WTC11 (cell line): ENCODE measurements at regions of chr19 and their contacts with region 1.

Region 1: GRCh38 chr19:42343344-42344110 is 18.1 kb downstream of the MEGF8 start:
- DNase-seq: peak; percentile 76
- ATAC-seq: peak; percentile 80
- H3K4me3 Mint-ChIP-seq: no peak overlapping the region
- H3K27ac Mint-ChIP-seq: no peak overlapping the region
- H3K4me1 Mint-ChIP-seq: no peaks in the 10 kb centered on the region
- H3K27me3 Mint-ChIP-seq: no peaks in the 10 kb centered on the region
- CTCF ChIP-seq: peak; percentile 63

Region 2: GRCh38 chr19:42229855-42230351 is 113.6 kb before region 1 on chr19:
- CTCF ChIA-PET with region 1: no interaction called
- POLR2A ChIA-PET with region 1: no interaction called
- DNase-seq: no peak
- ATAC-seq: no peak
- H3K4me3 Mint-ChIP-seq: no peak overlapping the region
- H3K27ac Mint-ChIP-seq: peak overlapping the region; percentile 41; the same call in 1 of the 2 replicates
- H3K4me1 Mint-ChIP-seq: 0 out of 2 replicates have a peak, but pooled peaks cover 4% of the 10 kb centered on the region
- H3K27me3 Mint-ChIP-seq: no peaks in the 10 kb centered on the region
- CTCF ChIP-seq: no peak

Region 3: DNA sequence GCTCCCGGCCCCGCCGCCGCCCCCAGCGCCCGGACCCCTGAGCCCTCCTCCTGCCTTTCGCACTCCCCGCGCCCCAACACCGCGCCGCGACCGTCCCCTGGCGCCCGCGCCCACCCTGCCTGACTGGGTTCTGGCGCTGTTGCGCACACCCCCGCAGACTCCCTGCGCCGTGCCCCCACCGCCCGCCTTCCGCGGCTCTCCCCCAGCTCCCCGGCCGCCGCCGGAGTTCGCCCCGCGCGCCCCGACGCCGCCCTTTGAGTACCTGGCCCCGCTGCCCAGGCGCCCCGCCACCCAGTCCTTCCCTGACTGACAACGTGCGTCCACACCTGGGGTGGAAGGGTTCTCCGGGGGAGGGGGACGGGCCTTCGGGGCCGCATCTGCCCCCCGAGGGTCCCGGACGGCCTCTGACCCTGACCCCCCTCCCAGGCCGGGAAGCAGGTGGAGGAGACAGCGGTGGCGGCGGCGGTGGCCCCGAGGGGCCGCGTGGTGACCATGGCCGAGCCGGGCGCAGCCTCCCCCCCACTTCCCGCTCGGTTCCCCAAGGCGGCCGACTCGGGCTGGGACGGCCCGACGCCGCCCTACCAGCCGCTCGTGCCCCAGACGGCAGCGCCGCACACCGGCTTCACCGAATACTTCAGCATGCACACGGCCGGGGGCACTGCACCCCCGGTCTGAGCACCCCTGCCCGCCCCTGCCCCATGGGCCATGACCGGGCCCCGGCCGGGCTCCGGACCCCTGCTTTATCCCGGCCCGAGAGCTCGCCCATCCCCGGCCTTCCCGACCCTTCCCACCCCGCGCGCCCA is 19.5 kb before region 1 on chr19:
- CTCF ChIA-PET with region 1: interaction called, 30 read pairs
- POLR2A ChIA-PET with region 1: no interaction called
- DNase-seq: peak; percentile 55
- ATAC-seq: no peak
- H3K4me3 Mint-ChIP-seq: peak overlapping the region; percentile 95
- H3K27ac Mint-ChIP-seq: no peak overlapping the region
- H3K4me1 Mint-ChIP-seq: peaks cover 14% of the 10 kb centered on the region
- H3K27me3 Mint-ChIP-seq: peaks cover 44% of the 10 kb centered on the region
- CTCF ChIP-seq: no peak

Region 4: DNA sequence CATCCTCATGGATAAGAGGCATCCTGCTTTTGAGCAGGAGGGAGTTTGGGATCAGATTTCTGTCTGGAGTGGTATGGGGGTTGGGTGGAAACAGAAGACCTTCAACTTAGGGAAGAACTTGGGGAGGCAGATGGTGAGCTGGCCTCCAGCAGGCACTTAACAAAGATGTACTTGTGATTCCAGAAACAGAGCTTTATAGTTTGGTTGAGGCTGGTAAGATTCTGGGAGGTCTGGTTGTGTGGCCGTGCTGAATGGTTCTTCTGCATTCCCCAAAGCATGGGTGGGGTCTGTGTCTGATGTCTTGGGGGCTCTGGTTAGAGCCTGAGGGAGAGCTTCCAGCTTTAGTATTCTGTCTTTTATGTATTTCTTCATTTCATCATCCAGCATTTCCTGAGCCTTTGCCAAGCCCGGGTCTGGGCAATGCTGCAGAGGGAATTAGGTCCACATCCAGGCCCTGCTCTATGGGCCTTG is 13.3 kb before region 1 on chr19:
- CTCF ChIA-PET with region 1: interaction called, 30 read pairs
- POLR2A ChIA-PET with region 1: no interaction called
- DNase-seq: no peak
- ATAC-seq: no peak
- H3K4me3 Mint-ChIP-seq: peak overlapping the region; percentile 27; the same call in 1 of the 2 replicates
- H3K27ac Mint-ChIP-seq: peak overlapping the region; percentile 8; the same call in 1 of the 2 replicates
- H3K4me1 Mint-ChIP-seq: peaks cover 24% of the 10 kb centered on the region
- H3K27me3 Mint-ChIP-seq: no peaks in the 10 kb centered on the region
- CTCF ChIP-seq: no peak

Region 5: GRCh38 chr19:42355896-42356295 is 12.4 kb after region 1 on chr19:
- CTCF ChIA-PET with region 1: interaction called, 18 read pairs
- POLR2A ChIA-PET with region 1: no interaction called
- DNase-seq: no peak
- ATAC-seq: no peak
- H3K4me3 Mint-ChIP-seq: no peak overlapping the region
- H3K27ac Mint-ChIP-seq: no peak overlapping the region
- H3K4me1 Mint-ChIP-seq: peaks cover 5% of the 10 kb centered on the region; the same call in 1 of the 2 replicates
- H3K27me3 Mint-ChIP-seq: no peaks in the 10 kb centered on the region
- CTCF ChIP-seq: no peak

Region 6: GRCh38 chr19:42360787-42361544 is 17.4 kb after region 1 on chr19:
- CTCF ChIA-PET with region 1: interaction called, 18 read pairs
- POLR2A ChIA-PET with region 1: no interaction called
- DNase-seq: peak; percentile 79
- ATAC-seq: peak; percentile 94
- H3K4me3 Mint-ChIP-seq: no peak overlapping the region
- H3K27ac Mint-ChIP-seq: peak overlapping the region; percentile 46; the same call in 1 of the 2 replicates
- H3K4me1 Mint-ChIP-seq: peaks cover 21% of the 10 kb centered on the region
- H3K27me3 Mint-ChIP-seq: no peaks in the 10 kb centered on the region
- CTCF ChIP-seq: no peak